Activated CD4-positive, alpha-beta memory T cell treated with anti-CD3 and anti-CD28 coated beads, Interleukin-2, amount 10 ng/mL, durations not matched to agents 7 days and 5 days (primary cell): ENCODE measurements at regions of chr11 and their contacts with region 1.

Region 1: DNA sequence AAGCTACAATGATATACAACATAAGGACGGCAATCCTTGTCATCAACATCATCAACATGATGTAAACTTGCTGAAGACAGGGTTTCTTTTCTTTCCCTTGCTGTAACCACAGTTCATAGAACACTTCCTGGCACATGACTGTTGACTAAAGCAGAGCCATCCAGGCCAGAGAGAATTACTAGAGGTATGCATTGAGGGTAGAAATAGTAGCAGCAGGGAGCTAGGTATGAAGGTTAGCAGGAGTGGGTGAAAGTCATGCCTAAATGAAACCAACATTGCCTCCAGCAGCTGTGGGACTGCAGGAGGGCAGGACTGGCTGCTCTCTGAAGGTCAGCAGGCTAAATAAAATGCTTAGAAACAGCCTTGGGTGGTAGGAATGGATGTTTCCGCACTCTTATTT is 103.7 kb downstream of the LRRC32 start:
- DNase-seq: no peak
- H3K4me3 Mint-ChIP-seq: no peak overlapping the region
- H3K27ac Mint-ChIP-seq: peak overlapping the region; percentile 74
- H3K4me1 Mint-ChIP-seq: peaks cover 39% of the 10 kb centered on the region
- H3K27me3 Mint-ChIP-seq: peaks cover 10% of the 10 kb centered on the region

Region 2: GRCh38 chr11:76592025-76592914 is 25.4 kb after region 1 on chr11:
- CTCF ChIA-PET with region 1: interaction called, 4 read pairs
- POLR2A ChIA-PET with region 1: interaction called, 10 read pairs
- DNase-seq: peak; percentile 42
- H3K4me3 Mint-ChIP-seq: no peak overlapping the region
- H3K27ac Mint-ChIP-seq: peak overlapping the region; percentile 78
- H3K4me1 Mint-ChIP-seq: peaks cover 87% of the 10 kb centered on the region
- H3K27me3 Mint-ChIP-seq: peaks cover 3% of the 10 kb centered on the region